ENCODE measurements at regions of chr18 and their contacts with region 1.

Region 1: DNA sequence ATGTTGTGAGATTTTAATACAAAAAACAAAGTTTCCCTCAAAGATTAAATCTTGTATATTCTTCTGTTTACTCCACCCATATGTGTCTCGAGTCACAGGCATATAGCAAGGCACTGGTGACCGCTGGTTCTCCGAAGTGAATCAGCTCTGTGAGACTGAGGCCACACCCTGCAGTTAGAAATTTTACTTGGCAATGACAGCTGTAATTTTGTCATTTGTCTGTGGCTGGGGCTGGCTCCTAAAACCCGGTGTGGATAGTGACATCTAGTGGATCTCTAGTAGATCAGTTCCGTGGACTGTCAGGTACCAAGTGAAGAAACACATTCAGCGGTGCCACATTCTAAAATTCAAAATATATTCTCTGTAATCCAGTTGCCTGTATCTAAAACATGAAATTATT is 278.0 kb downstream of the NEDD4L start:
- DNase-seq: peak; percentile 41
- H3K4me3 ChIP-seq: peak overlapping the region; percentile 34
- H3K27ac ChIP-seq: peak overlapping the region; percentile 66
- H3K4me1 ChIP-seq: peaks cover 33% of the 10 kb centered on the region
- H3K27me3 ChIP-seq: no peaks in the 10 kb centered on the region
- CTCF ChIP-seq: peak; percentile 76

Region 2: GRCh38 chr18:58195278-58195765 is 126.7 kb before region 1 on chr18:
- intact Hi-C with region 1: loop called (anchors 10 kb)
- DNase-seq: no peak
- H3K4me3 ChIP-seq: peak overlapping the region; percentile 64
- H3K27ac ChIP-seq: peak overlapping the region; percentile 39
- H3K4me1 ChIP-seq: peaks cover 35% of the 10 kb centered on the region
- H3K27me3 ChIP-seq: no peaks in the 10 kb centered on the region
- CTCF ChIP-seq: no peak